WTC11 (cell line): ENCODE measurements at regions of chr11 and their contacts with region 1.

Region 1: GRCh38 chr11:9314291-9315036 is at the start of gene TMEM41B:
- DNase-seq: peak; percentile 99
- ATAC-seq: peak; percentile 93
- H3K4me3 Mint-ChIP-seq: peak within 1 kb of the TSS; percentile 91
- H3K27ac Mint-ChIP-seq: peak within 1 kb of the TSS; percentile 99
- H3K4me1 Mint-ChIP-seq: peaks cover 43% of the 10 kb centered on the region
- H3K27me3 Mint-ChIP-seq: no peaks in the 10 kb centered on the region
- CTCF ChIP-seq: no peak
- total RNA-seq, gene TMEM41B: 45.8 to 46.5 TPM (median 46.1 TPM) in 3 replicates

Region 2: GRCh38 chr11:9092853-9093778 is 221.3 kb before region 1 on chr11:
- CTCF ChIA-PET with region 1: no interaction called
- POLR2A ChIA-PET with region 1: no interaction called
- DNase-seq: no peak
- ATAC-seq: no peak
- H3K4me3 Mint-ChIP-seq: peak overlapping the region; percentile 58
- H3K27ac Mint-ChIP-seq: no peak overlapping the region
- H3K4me1 Mint-ChIP-seq: peaks cover 12% of the 10 kb centered on the region
- H3K27me3 Mint-ChIP-seq: peaks cover 49% of the 10 kb centered on the region
- CTCF ChIP-seq: no peak

Region 3: DNA sequence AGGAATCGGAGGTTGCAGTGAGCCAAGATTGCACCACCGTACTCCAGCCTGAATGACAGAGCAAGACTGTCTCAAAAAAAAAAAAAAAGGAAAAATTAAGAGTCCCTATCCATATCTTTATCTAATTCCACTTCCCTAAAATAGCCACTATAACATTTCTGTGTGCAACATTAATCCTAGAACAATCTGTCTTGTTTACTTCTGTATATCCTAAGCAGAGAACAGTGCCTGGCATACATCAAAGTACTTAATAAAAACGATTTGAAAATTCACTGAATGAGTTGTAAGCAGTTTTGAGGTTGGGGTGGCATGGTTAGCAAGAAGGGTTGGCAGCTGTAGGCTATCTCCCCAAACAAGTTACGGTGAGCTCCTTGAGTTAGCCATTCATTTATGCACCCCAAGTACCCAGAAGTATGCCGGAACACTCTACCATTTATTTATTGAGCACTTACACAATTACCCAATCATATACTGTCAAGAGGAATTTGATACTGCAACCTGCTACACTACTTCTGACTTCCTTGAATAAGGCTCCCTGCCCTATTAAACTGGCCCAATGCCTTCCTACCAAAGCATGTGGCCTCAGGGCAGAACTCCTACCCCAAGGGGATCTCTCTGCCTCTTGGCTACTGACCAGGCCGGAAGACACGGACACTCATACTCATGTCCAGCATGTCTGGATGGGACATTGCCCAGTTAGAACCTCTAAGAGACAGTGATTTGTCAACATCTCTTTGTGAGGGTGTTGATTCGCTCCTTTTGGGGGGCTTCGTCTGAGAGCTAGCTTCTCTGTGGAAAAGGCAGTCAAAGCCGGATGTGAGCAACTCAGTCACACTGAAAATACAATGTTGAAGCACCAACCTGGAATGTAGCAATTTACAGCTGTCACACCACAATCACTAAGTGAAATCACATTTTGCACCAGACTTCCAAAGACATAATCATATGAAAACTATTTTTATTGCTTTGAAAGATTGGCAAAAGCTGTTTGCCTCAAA is 16.2 kb after region 1 on chr11:
- CTCF ChIA-PET with region 1: no interaction called
- POLR2A ChIA-PET with region 1: no interaction called
- DNase-seq: no peak
- ATAC-seq: no peak
- H3K4me3 Mint-ChIP-seq: no peak overlapping the region
- H3K27ac Mint-ChIP-seq: no peak overlapping the region
- H3K4me1 Mint-ChIP-seq: no peaks in the 10 kb centered on the region; the same call in 1 of the 2 replicates
- H3K27me3 Mint-ChIP-seq: no peaks in the 10 kb centered on the region
- CTCF ChIP-seq: no peak

Region 4: GRCh38 chr11:9347100-9347499 is 32.6 kb after region 1 on chr11:
- CTCF ChIA-PET with region 1: interaction called, 10 read pairs
- POLR2A ChIA-PET with region 1: no interaction called
- DNase-seq: no peak
- ATAC-seq: no peak; the same call in 1 of the 2 replicates
- H3K4me3 Mint-ChIP-seq: no peak overlapping the region
- H3K27ac Mint-ChIP-seq: 0 out of 2 replicates have a peak overlapping the region, but pooled peaks have one; percentile 38
- H3K4me1 Mint-ChIP-seq: peaks cover 24% of the 10 kb centered on the region
- H3K27me3 Mint-ChIP-seq: no peaks in the 10 kb centered on the region
- CTCF ChIP-seq: no peak